Activated naive CD4-positive, alpha-beta T cell treated with anti-CD3 and anti-CD28 coated beads for 36 hours (primary cell): ENCODE measurements at regions of chr19 and their contacts with region 1.

Region 1: DNA sequence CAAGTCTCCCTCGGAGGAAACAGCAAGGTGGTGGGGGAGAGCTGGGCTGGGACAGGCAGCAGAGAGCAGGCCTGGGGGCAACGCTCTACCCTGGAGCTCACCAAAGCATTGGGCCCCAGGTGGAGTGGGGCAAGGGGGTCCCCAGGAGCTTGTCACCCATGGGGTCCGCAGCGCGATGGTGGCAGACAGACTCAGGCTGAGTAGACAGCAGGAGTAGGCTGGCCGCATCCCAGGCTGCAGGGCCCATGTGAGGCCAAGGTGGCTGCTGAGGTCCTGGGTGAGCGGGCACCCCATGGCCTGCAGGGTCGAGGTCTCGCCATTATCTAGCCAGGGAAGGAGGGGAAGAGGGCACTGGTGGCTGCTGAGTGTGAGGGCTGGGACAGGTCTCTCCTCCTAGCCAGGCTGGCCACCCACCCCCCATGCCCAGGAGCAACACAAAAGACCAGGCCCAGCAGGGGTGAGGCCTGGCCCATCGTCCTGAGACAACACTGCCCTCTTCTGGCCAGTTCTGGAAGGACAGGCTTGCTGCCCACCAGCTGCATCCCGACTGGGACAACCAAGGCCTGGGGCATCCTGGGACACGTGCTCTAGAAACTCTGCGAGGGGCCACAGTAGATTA is 33.1 kb downstream of the CEBPG start:
- DNase-seq: peak; percentile 84
- H3K4me3 Mint-ChIP-seq: no peak overlapping the region
- H3K27ac Mint-ChIP-seq: no peak overlapping the region
- H3K4me1 Mint-ChIP-seq: no peaks in the 10 kb centered on the region
- H3K27me3 Mint-ChIP-seq: no peaks in the 10 kb centered on the region

Region 2: GRCh38 chr19:33125929-33126388 is 280.7 kb before region 1 on chr19:
- CTCF ChIA-PET with region 1: no interaction called
- intact Hi-C with region 1: loop called (anchors 5 kb)
- DNase-seq: peak; percentile 69
- H3K4me3 Mint-ChIP-seq: no peak overlapping the region
- H3K27ac Mint-ChIP-seq: no peak overlapping the region
- H3K4me1 Mint-ChIP-seq: peaks cover 3% of the 10 kb centered on the region
- H3K27me3 Mint-ChIP-seq: no peaks in the 10 kb centered on the region

Region 3: GRCh38 chr19:33143897-33144405 is 262.7 kb before region 1 on chr19:
- CTCF ChIA-PET with region 1: interaction called, 4 read pairs
- intact Hi-C with region 1: loop called (anchors 5 kb)
- DNase-seq: peak; percentile 69
- H3K4me3 Mint-ChIP-seq: no peak overlapping the region
- H3K27ac Mint-ChIP-seq: no peak overlapping the region
- H3K4me1 Mint-ChIP-seq: peaks cover 4% of the 10 kb centered on the region
- H3K27me3 Mint-ChIP-seq: no peaks in the 10 kb centered on the region

Region 4: DNA sequence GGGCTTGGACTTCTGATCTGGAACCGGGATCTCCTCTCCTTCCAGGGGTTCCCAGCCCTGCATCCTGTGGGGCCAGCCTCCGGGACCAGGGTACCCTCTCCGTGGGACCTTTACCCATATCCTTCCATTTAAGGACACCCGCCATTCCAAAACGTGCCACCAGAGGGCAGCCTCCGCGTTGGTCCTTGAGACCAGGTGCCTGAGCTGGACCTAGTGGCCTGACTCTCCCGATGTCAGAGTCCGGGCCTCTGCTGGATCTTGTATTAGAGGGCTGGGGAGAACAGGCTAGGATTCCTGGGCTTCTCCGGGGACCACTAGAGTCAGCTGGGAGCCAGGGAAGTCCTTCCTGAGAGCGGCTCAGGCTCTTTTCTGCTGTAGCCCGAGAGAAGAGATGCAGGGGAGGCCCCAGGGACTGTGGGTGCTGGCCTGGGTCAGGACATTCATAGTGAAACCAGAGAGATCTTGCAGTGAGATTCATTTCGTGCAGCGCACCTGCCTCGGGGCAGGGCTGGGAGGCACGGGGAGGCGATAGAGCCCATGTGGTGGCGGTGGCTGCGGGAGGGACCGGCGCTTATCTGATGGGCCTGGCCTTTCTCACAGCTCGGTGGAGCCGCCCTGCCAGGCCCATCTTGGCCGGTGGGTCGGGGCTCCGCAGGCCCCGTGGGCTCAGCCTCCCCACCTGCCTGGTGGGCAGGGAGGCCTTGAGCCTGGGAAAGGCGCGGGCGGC is 171.2 kb before region 1 on chr19:
- CTCF ChIA-PET with region 1: interaction called, 31 read pairs
- intact Hi-C with region 1: loop called (anchors 1 kb)
- DNase-seq: peak; percentile 81
- H3K4me3 Mint-ChIP-seq: no peak overlapping the region
- H3K27ac Mint-ChIP-seq: no peak overlapping the region
- H3K4me1 Mint-ChIP-seq: no peaks in the 10 kb centered on the region
- H3K27me3 Mint-ChIP-seq: peaks cover 11% of the 10 kb centered on the region

Region 5: GRCh38 chr19:33241530-33242101 is 165.0 kb before region 1 on chr19:
- CTCF ChIA-PET with region 1: interaction called, 31 read pairs
- intact Hi-C with region 1: loop called (anchors 1 kb)
- DNase-seq: no peak
- H3K4me3 Mint-ChIP-seq: no peak overlapping the region
- H3K27ac Mint-ChIP-seq: no peak overlapping the region
- H3K4me1 Mint-ChIP-seq: no peaks in the 10 kb centered on the region
- H3K27me3 Mint-ChIP-seq: peaks cover 5% of the 10 kb centered on the region

Region 6: GRCh38 chr19:33280351-33280921 is 126.2 kb before region 1 on chr19:
- CTCF ChIA-PET with region 1: no interaction called
- intact Hi-C with region 1: no loop called
- DNase-seq: peak; percentile 76
- H3K4me3 Mint-ChIP-seq: peak overlapping the region; percentile 43
- H3K27ac Mint-ChIP-seq: no peak overlapping the region
- H3K4me1 Mint-ChIP-seq: peaks cover 11% of the 10 kb centered on the region
- H3K27me3 Mint-ChIP-seq: peaks cover 17% of the 10 kb centered on the region

Region 7: DNA sequence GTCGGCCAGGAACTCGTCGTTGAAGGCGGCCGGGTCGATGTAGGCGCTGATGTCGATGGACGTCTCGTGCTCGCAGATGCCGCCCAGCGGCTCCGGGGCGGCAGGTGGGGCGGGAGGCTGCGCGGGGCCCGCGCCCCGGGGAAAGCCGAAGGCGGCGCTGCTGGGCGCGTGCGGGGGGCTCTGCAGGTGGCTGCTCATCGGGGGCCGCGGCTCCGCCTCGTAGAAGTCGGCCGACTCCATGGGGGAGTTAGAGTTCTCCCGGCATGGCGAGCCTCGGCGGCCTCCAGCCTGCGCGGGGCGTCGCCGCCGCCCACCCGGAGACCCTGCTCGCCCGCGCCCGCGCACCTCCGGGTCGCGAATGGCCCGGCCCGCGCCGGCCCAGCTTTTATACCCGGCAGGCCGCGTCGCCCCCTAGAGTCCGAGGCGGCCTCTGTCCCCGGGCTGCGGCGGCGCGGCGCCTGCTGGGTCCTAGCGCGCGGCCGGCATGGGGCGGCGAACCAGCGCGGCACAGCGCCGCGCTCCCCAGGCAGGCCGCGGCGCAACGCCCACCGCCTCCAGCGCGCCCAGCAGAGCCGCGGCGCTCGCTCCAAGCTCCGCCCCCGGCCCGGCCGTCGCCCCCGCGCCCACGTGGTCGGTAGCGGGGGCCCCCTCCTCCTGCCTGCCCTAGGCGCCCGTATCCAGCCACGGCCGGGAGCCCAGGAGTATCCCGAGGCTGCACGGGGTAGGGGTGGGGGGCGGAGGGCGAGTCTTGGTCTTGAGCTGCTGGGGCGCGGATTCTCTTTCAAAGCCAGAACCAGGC is 104.3 kb before region 1 on chr19 and contains the start of gene CEBPA:
- CTCF ChIA-PET with region 1: no interaction called
- intact Hi-C with region 1: loop called (anchors 5 kb)
- DNase-seq: peak; percentile 52
- H3K4me3 Mint-ChIP-seq: peak within 1 kb of the TSS; percentile 42
- H3K27ac Mint-ChIP-seq: no peak within 1 kb of the TSS
- H3K4me1 Mint-ChIP-seq: no peaks in the 10 kb centered on the region
- H3K27me3 Mint-ChIP-seq: peaks cover 35% of the 10 kb centered on the region
- total RNA-seq, gene CEBPA: 0.10 TPM

Region 8: GRCh38 chr19:33368074-33368864 is 38.4 kb before region 1 on chr19:
- CTCF ChIA-PET with region 1: no interaction called
- intact Hi-C with region 1: no loop called
- DNase-seq: no peak
- H3K4me3 Mint-ChIP-seq: no peak overlapping the region
- H3K27ac Mint-ChIP-seq: no peak overlapping the region
- H3K4me1 Mint-ChIP-seq: peaks cover 7% of the 10 kb centered on the region
- H3K27me3 Mint-ChIP-seq: no peaks in the 10 kb centered on the region